Prostate gland (tissue), 2 donors: ENCODE measurements at regions of chr2 and their contacts with region 1.

Region 1: DNA sequence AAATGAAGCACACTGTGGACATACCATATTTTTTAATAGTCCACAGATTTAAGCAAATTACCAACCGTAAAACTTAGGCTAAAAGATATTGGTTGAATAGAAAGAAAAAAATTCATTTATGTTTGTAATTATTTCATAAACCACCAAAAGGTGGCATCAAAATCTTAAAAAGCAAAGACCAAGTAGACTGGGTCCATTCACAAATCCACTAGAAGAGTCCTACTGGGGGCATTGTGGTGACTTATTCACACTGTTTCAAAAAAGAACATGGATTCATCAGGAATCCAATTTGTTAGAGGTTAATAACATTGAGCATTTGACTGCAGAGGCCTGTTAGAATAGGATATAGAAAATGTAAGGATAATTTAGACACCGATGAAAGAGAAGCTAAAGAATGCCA is 194.9 kb upstream of the KYNU start:
- DNase-seq: no peak
- H3K4me3 ChIP-seq: no peak overlapping the region
- H3K27ac ChIP-seq: no peak overlapping the region
- H3K4me1 ChIP-seq: no peaks in the 10 kb centered on the region
- H3K27me3 ChIP-seq: no peaks in the 10 kb centered on the region
- CTCF ChIP-seq: peak in 2 of 4 experiments; percentile 9 to 18
- POLR2A ChIP-seq: no peak

Region 2: GRCh38 chr2:142980561-142981378 is 298.2 kb after region 1 on chr2:
- intact Hi-C with region 1: loop called (anchors 2 kb)
- DNase-seq: no peak
- H3K4me3 ChIP-seq: no peak overlapping the region
- H3K27ac ChIP-seq: no peak overlapping the region
- H3K4me1 ChIP-seq: no peaks in the 10 kb centered on the region
- H3K27me3 ChIP-seq: no peaks in the 10 kb centered on the region
- CTCF ChIP-seq: peak in 3 of 4 experiments; percentile 59 to 66 (median 60)
- POLR2A ChIP-seq: no peak